GM10248 (cell line): ENCODE measurements at regions of chr2 and their contacts with region 1.

Region 1: DNA sequence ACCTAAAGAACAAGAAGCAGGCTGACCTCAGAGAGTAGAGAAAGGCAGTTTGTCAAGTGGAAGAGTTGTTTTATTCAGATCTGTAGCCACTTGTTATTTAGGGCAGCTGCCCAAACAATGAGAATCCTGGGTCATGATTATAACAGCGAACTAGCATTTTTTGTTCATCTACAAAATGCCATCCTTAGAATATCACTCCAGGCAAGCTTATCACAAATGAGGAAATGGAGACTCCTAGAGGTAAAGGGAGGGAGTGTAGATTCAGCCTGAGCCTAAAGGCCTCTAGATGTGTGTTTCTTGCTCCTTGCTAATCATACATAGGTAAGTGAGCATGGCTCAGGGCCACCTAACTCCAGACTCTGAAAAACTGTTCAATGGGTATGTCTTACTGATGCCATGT is 126.1 kb downstream of the HNMT start:
- DNase-seq: peak; percentile 39
- CTCF ChIP-seq: peak; percentile 55

Region 2: DNA sequence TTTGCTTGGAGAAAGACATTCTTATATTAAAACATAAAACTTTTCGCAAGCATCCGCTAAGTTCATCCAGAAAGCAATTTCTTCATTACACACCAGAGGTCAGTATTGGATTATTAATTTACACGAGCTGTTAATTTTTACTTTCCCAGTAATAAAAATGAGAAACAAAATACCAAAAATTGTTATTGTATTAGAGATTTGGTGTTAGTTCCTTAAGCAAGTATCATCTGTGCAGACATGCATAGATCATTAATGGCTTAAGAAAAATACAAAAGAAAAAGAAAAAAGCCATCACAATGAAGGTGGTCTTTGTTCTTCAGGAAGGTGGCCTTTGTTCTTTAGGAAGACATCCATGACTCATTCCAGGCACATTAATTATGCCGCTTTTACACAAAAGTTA is 179.7 kb before region 1 on chr2:
- CTCF ChIA-PET with region 1: interaction called, 34 read pairs
- POLR2A ChIA-PET with region 1: no interaction called
- DNase-seq: no peak
- CTCF ChIP-seq: peak; percentile 36

Region 3: DNA sequence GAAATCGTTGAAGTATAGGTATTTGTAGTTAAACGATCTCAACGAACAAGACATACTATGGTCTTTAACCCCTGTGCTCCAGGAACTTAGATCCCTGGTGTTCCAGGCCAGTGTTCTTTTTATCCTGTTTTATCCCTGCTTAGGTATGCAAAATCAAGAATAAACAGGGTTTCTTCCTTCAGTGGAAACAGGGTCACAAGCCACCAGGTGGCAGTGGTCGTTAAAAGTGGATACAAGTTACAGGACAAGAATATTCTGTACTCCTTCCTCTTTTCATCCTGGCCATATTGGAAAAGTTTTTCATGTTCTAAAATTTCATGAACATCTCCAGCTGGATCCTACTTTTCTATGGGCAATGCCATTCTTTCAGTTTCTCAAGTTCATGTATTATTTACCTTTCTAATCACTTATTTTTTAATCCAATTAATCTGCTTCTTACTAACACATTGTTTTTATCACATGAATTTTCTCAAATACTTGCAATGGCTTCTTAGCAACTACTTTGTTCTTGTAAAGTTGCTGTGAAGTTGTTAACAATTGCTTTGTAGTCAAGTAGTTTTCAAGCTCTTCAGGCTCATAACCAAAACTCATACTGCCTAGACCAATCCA is 142.5 kb before region 1 on chr2:
- CTCF ChIA-PET with region 1: interaction called, 16 read pairs
- POLR2A ChIA-PET with region 1: no interaction called
- DNase-seq: peak; percentile 19
- CTCF ChIP-seq: peak; percentile 45

Region 4: DNA sequence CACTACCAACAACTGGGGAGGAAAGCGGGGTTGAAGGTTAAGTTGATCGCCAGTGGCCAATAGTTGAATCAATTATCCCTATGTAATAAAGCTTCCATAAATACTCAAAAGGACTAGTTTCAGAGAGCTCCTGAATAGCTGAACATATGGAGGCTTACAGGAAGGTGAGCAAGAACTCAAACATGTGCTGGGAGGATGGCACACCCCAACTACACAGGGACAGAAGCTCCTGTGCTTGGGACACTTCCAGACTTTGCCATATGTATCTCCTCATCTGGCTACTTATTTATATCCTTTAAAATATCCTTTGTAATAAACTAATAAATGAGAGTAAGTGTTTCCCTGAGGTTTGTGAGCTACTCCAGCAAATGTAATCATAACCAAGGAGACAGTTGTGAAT is 10.4 kb before region 1 on chr2:
- CTCF ChIA-PET with region 1: interaction called, 16 read pairs
- POLR2A ChIA-PET with region 1: no interaction called
- DNase-seq: no peak
- CTCF ChIP-seq: no peak

Region 5: GRCh38 chr2:138105358-138106017 is 15.2 kb after region 1 on chr2:
- CTCF ChIA-PET with region 1: interaction called, 10 read pairs
- POLR2A ChIA-PET with region 1: no interaction called
- DNase-seq: no peak
- CTCF ChIP-seq: no peak